Gastrocnemius medialis (tissue), 4 donors: ENCODE measurements at regions of chr6 and their contacts with region 1.

Region 1: GRCh38 chr6:27177485-27178406 is 69.8 kb upstream of the PRSS16 start:
- DNase-seq: peak; percentile 29 to 55
- ATAC-seq: peak; percentile 68 to 74
- H3K4me3 ChIP-seq: peak overlapping the region; percentile 81 to 92 (median 84)
- H3K27ac ChIP-seq: peak overlapping the region; percentile 55 to 72 (median 62)
- H3K4me1 ChIP-seq: peaks cover 5% of the 10 kb centered on the region in 2 donors
- H3K27me3 ChIP-seq: peaks cover 0 to 2% (median 0%) of the 10 kb centered on the region in 3 donors
- CTCF ChIP-seq: peak in 2 of 5 experiments; percentile 30 to 48
- POLR2A ChIP-seq: peak in 1 of 2 donors; percentile 18

Region 2: GRCh38 chr6:26312501-26313390 is 865.0 kb before region 1 on chr6:
- in situ Hi-C with region 1: no loop called
- intact Hi-C with region 1: loop called (anchors 10 kb)
- DNase-seq: peak; percentile 67
- ATAC-seq: peak; percentile 81 to 82
- H3K4me3 ChIP-seq: peak overlapping the region; percentile 54 to 65 (median 54)
- H3K27ac ChIP-seq: peak overlapping the region; percentile 67 to 83 (median 75)
- H3K4me1 ChIP-seq: peaks cover 8 to 10% of the 10 kb centered on the region in 2 donors
- H3K27me3 ChIP-seq: no peaks in the 10 kb centered on the region
- CTCF ChIP-seq: no peak
- POLR2A ChIP-seq: no peak

Region 3: GRCh38 chr6:27374824-27375612 is 197.3 kb after region 1 on chr6:
- in situ Hi-C with region 1: no loop called
- intact Hi-C with region 1: loop called (anchors 10 kb)
- DNase-seq: peak; percentile 59 to 74
- ATAC-seq: peak; percentile 98 to 99
- H3K4me3 ChIP-seq: peak overlapping the region; percentile 64 to 79 (median 74)
- H3K27ac ChIP-seq: peak overlapping the region; percentile 41 to 57 (median 45)
- H3K4me1 ChIP-seq: peaks cover 6 to 13% of the 10 kb centered on the region in 2 donors
- H3K27me3 ChIP-seq: no peaks in the 10 kb centered on the region
- CTCF ChIP-seq: no peak
- POLR2A ChIP-seq: no peak

Region 4: DNA sequence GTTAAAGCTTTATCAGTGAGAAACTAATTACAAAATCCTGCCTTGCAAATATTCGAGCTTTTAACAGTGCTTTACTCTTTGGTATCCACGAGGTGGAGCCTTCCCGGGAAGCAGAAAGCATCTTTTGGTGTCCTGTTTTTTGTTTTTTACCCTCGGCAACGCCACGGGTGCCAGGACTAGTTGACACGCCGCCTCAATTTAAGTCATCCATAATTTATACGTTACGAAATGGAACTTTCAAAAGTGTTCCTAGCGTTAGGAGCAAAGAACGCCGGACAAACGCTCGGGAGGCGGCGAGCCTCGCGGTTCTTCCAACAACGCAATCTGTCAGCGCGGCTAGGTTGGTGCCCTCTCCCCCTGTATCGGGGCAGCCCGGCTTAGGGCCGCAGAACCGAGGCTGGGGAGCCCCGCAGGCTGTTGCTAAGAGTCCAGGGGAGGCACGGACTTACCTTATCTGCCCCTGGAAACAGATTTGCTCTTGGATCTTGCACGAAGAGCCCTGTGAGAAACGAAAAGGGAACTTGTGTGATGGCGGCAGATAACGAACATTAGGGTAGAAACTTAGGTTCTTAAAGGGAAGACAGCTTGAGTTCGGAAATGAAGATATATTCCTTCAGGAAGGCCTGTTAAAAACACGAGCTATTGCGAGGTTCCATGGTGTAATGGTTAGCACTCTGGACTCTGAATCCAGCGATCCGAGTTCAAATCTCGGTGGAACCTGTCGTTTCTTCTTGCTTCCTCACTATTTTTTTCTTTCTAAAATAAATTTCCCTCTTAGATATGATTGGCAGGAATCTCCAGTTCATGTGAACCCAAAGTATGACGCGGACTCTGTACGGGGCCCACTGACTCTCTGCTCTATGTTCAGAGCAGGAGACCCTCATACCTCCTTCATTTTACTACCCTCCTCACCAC is 341.4 kb after region 1 on chr6:
- in situ Hi-C with region 1: loop called in 1 of 4 experiments (anchors 25 kb)
- intact Hi-C with region 1: loop called (anchors 5 kb)
- DNase-seq: peak; percentile 18 to 29
- ATAC-seq: peak; percentile 88 to 89
- H3K4me3 ChIP-seq: peak overlapping the region; percentile 65 to 88 (median 76)
- H3K27ac ChIP-seq: peak overlapping the region; percentile 77 to 82 (median 79)
- H3K4me1 ChIP-seq: peaks cover 6 to 7% of the 10 kb centered on the region in 2 donors
- H3K27me3 ChIP-seq: peaks cover 4 to 11% (median 8%) of the 10 kb centered on the region in 3 donors
- CTCF ChIP-seq: peak in 4 of 5 experiments; percentile 32 to 65 (median 59)
- POLR2A ChIP-seq: no peak